Posterior vena cava (tissue), 2 donors: ENCODE measurements at regions of chr3 and their contacts with region 1.

Region 1: DNA sequence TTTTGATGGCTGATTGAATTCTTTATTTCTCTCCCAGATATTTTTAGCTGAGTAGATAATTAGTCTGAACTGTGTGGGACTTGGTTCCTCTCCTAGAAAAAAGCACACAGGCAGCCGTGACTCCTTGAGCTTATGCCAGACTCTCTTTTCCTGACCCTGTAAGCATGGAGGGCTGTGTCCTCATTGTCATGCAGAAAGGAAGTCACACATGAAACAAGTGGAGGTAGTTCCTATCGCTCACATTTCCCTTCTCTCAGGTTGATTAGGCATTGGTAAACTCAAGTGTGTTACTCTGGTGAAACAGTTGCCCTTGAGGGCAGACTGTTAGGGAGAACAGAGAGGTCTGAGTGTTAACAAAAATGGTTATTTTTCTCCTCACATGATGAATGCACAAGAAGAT is 6.3 kb upstream of the RTP4 start:
- DNase-seq: no peak

Region 2: GRCh38 chr3:187085021-187085666 is 276.7 kb before region 1 on chr3:
- intact Hi-C with region 1: no loop called
- DNase-seq: no peak

Region 3: GRCh38 chr3:188520466-188520865 is 1158.6 kb after region 1 on chr3:
- intact Hi-C with region 1: loop called in 1 of 2 experiments (anchors 5 kb)
- DNase-seq: no peak